Left ventricle myocardium inferior (tissue), 1 donor: ENCODE measurements at regions of chr12 and their contacts with region 1.

Region 1: DNA sequence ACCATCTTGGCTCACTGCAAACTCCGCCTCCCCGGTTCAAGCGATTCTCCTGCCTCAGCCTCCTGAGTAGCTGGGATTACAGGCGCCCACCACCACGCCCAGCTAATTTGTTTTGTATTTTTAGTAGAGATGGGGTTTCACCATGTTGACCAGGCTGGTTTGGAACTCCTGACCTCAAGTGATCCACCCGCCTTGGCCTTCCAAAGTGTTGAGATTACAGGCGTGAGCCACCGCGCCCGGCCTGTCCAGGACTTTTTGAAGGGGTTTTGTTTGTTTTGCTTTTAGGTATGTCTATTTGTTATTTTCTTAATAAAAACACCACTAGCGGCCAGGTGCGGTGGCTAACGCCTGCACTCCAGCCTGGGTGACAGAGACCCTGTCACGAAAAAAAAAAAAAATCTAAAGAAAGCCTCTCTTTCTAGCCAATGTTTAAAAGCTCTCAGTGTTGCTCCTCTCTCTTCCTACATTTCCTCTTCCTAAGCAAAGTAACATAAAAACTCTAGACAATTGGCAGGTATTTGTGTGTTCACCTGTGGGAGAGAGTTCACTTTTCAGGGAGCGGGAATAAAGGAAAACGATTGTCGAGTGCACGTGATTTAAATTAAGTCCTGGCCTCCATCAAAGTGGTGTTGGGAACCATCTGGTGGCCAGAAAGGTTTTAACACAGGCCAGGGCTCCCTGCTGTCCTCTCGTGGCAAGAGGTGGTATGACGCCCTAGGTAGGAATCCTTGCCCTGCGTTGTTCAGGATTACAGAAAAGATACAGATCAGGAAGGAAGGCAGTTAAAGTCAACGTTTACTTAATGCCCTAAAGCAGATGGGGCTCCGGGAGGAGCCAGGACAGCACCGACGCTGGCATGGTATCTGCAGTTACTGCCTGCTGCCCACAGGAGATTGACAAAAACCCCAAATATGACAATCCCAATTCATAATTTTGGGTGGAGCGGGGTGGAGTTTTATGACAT is 36.2 kb upstream of the ATP23 start:
- DNase-seq: peak; percentile 81
- H3K4me3 ChIP-seq: peak overlapping the region; percentile 48
- H3K27ac ChIP-seq: no peak overlapping the region
- H3K4me1 ChIP-seq: peaks cover 10% of the 10 kb centered on the region
- H3K27me3 ChIP-seq: no peaks in the 10 kb centered on the region
- CTCF ChIP-seq: peak; percentile 100

Region 2: GRCh38 chr12:57695770-57696432 is 209.2 kb before region 1 on chr12:
- intact Hi-C with region 1: no loop called
- DNase-seq: no peak
- H3K4me3 ChIP-seq: no peak overlapping the region
- H3K27ac ChIP-seq: no peak overlapping the region
- H3K4me1 ChIP-seq: peaks cover 13% of the 10 kb centered on the region
- H3K27me3 ChIP-seq: no peaks in the 10 kb centered on the region
- CTCF ChIP-seq: no peak

Region 3: DNA sequence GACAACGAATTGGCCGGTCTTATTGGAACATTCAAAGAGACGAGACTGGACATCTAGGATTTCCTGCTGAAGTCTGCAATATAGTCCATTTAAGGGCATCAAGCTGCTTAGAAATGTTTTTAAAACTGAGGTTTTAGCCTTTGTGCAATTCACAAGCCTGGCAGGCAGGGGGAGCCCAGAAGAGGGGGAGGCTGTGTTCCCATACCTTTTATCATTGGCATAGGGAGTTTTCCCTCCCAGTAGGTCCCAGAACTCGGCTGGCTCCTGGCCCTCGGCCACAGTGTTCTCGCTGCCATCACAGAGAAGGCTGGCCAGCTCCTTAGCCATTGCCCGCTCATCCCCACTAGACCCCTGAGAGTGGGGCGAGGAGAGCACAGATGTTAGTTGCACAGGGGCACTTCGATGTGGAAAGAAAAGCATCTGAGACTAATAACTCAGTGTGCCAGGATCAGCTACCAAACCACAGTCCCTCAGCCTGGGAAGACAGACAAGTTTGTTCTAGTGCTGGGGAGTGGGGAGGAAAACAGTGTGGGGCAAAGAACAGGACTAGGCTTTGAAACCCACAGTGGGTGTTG is 101.7 kb before region 1 on chr12:
- intact Hi-C with region 1: loop called (anchors 10 kb)
- DNase-seq: peak; percentile 50
- H3K4me3 ChIP-seq: no peak overlapping the region
- H3K27ac ChIP-seq: peak overlapping the region; percentile 23
- H3K4me1 ChIP-seq: peaks cover 7% of the 10 kb centered on the region
- H3K27me3 ChIP-seq: no peaks in the 10 kb centered on the region
- CTCF ChIP-seq: peak; percentile 88

Region 4: GRCh38 chr12:58254463-58255100 is 349.5 kb after region 1 on chr12:
- intact Hi-C with region 1: no loop called
- DNase-seq: no peak
- H3K4me3 ChIP-seq: no peak overlapping the region
- H3K27ac ChIP-seq: no peak overlapping the region
- H3K4me1 ChIP-seq: peaks cover 11% of the 10 kb centered on the region
- H3K27me3 ChIP-seq: no peaks in the 10 kb centered on the region
- CTCF ChIP-seq: no peak